Vagina (tissue), 2 donors: ENCODE measurements at regions of chr9 and their contacts with region 1.

Region 1: DNA sequence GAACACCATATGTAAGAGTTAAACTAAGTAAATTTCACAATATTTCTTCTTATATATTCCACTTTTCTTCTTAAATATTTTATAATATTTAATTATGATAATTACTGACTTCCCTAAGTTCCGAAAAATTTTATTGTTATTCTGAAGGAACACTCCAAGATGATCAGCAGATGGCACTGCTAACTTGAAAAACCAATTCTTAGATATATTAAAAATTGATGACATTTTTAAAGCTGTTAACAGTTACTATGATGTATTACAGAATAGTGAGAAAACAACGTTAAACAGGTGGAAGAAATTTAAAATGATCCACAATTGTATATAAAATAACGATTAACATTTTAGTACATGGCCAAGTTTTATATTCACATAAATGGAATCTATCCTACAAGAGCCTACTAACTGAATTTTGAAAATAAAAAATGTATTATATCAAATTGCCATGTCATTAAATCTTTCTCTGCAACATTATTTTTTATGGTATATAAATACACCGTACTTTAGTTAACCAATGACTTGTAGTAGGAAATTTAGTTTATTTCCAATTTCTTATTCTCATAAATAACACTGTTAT is 30.1 kb upstream of the MUSK start:
- DNase-seq: no peak
- H3K4me3 ChIP-seq: no peak overlapping the region
- H3K27ac ChIP-seq: no peak overlapping the region
- H3K4me1 ChIP-seq: no peaks in the 10 kb centered on the region
- H3K27me3 ChIP-seq: no peaks in the 10 kb centered on the region
- CTCF ChIP-seq: peak in 1 of 3 experiments; percentile 51
- POLR2A ChIP-seq: no peak

Region 2: GRCh38 chr9:111298731-111299598 is 660.5 kb after region 1 on chr9:
- intact Hi-C with region 1: loop called (anchors 5 kb)
- DNase-seq: no peak
- H3K4me3 ChIP-seq: no peak overlapping the region
- H3K27ac ChIP-seq: peak overlapping the region; percentile 48
- H3K4me1 ChIP-seq: peaks cover 9% of the 10 kb centered on the region
- H3K27me3 ChIP-seq: no peaks in the 10 kb centered on the region
- CTCF ChIP-seq: peak; percentile 67 to 87 (median 69)
- POLR2A ChIP-seq: no peak